CD8-positive, alpha-beta T cell (primary cell): ENCODE measurements at regions of chr21 and their contacts with region 1.

Region 1: GRCh38 chr21:15534450-15534886 is 195.3 kb upstream of the USP25 start:
- DNase-seq: peak in 2 of 9 experiments; percentile 10 to 18
- ATAC-seq: peak; percentile 29
- H3K4me3 ChIP-seq: no peak overlapping the region
- H3K4me3 Mint-ChIP-seq: no peak overlapping the region
- H3K27ac ChIP-seq: no peak overlapping the region
- H3K27ac Mint-ChIP-seq: no peak overlapping the region
- H3K4me1 ChIP-seq: no peaks in the 10 kb centered on the region
- H3K4me1 Mint-ChIP-seq: peaks cover 10% of the 10 kb centered on the region
- H3K27me3 ChIP-seq: no peaks in the 10 kb centered on the region
- H3K27me3 Mint-ChIP-seq: peaks cover 3% of the 10 kb centered on the region
- CTCF ChIP-seq: no peak

Region 2: DNA sequence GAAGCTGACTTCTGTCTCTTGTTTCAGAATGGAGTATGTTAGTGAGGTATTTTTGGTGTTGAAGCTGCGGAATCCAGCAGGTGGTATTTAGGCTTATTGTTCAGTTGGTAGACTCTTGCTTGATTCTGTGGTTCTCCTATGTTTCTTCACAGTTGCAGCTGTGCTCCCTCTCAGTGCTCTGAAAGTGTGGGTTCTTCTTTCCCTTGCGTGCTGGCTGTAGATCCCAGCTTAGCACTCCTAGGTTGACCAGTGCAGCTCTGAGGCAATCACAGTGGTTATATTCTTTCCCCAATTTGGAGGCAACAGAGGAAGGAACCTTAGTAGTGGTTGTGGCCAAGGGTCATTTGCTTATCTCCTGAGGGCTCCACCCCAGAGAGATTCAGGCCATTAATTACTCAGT is 200.5 kb before region 1 on chr21:
- CTCF ChIA-PET with region 1: no interaction called
- POLR2A ChIA-PET with region 1: no interaction called
- intact Hi-C with region 1: no loop called
- DNase-seq: no peak
- ATAC-seq: no peak
- H3K4me3 ChIP-seq: no peak overlapping the region
- H3K4me3 Mint-ChIP-seq: no peak overlapping the region
- H3K27ac ChIP-seq: no peak overlapping the region
- H3K27ac Mint-ChIP-seq: no peak overlapping the region
- H3K4me1 ChIP-seq: no peaks in the 10 kb centered on the region
- H3K4me1 Mint-ChIP-seq: no peaks in the 10 kb centered on the region
- H3K27me3 ChIP-seq: no peaks in the 10 kb centered on the region
- H3K27me3 Mint-ChIP-seq: no peaks in the 10 kb centered on the region
- CTCF ChIP-seq: no peak

Region 3: DNA sequence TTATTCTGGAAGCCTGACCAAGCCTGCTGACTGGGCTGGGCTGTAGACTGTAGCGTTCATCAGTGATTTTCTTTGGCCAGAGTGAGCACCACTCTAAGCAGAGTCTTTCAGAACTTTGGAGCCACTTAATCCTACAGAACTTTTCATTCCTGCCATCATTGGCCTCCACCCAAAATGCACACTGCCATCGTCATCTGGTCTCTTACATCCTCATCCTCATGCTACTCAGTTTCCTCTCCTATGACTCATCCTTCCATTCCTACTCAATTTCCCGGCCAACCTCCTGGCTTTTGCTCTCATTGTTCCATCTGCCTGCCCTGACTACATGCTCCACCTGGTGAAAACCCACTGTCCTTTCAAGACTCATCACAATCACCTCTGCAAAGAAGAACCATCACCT is 38.5 kb before region 1 on chr21:
- CTCF ChIA-PET with region 1: no interaction called
- POLR2A ChIA-PET with region 1: no interaction called
- intact Hi-C with region 1: loop called in 1 of 2 experiments (anchors 5 kb)
- DNase-seq: no peak
- ATAC-seq: no peak
- H3K4me3 ChIP-seq: no peak overlapping the region
- H3K4me3 Mint-ChIP-seq: no peak overlapping the region
- H3K27ac ChIP-seq: no peak overlapping the region
- H3K27ac Mint-ChIP-seq: no peak overlapping the region
- H3K4me1 ChIP-seq: no peaks in the 10 kb centered on the region
- H3K4me1 Mint-ChIP-seq: no peaks in the 10 kb centered on the region
- H3K27me3 ChIP-seq: no peaks in the 10 kb centered on the region
- H3K27me3 Mint-ChIP-seq: no peaks in the 10 kb centered on the region
- CTCF ChIP-seq: no peak